Activated CD4-positive, alpha-beta memory T cell treated with anti-CD3 and anti-CD28 coated beads, Interleukin-2, amount 10 ng/mL, durations not matched to agents 7 days and 5 days (primary cell): ENCODE measurements at regions of chr14 and their contacts with region 1.

Region 1: DNA sequence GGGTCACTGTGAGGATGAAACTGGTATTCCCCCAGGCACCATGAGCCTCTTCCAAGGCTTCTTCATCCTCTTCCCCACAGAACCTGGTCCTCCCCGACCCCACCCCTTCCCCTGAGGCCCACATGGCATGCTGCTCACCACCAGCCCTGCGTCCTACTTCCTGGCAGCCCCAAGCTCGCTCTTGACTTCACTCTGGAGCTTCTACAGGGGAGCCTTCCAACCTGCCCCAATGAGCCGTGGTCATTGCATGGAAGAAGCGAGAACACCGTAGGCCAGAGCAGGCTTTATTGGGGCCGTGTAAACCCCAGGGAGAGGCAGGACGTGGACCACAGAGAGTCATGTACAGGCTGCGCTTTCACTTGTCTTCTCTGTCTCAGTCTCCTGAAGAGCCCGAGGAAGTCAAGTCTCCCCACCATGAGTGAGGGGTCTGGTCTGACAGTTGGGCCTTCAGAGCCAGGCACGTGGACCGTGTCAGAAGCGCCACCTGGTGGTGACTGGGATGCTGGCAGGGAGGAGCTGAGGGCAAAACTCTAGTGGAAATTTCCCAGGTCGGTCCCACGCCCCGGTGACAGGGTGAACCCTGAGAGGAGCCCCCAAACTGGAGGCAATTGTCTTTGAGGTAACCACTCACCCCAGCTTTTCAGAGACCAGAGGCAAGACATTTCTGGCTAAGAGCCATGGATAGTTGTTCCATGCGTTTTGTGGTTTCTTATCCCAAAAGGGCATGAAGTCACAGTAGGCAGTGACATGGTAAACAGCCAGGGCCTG is 17.5 kb downstream of the RPS6KL1 start:
- DNase-seq: peak; percentile 76
- H3K4me3 Mint-ChIP-seq: no peak overlapping the region
- H3K27ac Mint-ChIP-seq: no peak overlapping the region
- H3K4me1 Mint-ChIP-seq: peaks cover 3% of the 10 kb centered on the region
- H3K27me3 Mint-ChIP-seq: no peaks in the 10 kb centered on the region

Region 2: DNA sequence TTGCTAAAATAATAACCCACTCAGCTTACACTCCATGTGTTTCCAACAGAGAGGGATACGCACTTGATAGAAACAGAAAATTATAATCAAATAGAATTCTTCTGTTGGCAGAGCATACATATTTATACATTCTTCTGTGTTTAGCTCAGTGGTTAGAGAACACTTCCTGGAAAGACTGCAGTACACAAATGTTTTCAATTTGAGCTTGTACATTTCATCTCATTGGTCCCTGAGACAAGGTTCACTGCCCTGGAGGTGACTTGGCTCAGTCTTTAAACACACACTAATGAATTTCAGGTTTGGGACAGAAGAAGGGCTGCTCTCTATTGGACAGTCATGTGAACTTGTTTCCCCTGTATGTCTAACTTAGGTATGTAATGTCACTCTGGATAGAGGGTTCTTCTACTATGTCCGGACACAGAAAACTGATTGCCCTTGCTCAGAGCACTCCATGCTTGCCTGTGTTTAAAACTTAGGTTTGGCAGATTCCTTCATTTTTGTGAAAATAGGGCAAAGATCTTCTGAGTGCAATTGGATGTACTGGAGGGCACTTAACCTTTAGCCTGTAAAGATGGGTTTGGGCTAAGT is 52.5 kb before region 1 on chr14:
- CTCF ChIA-PET with region 1: interaction called, 285 read pairs
- POLR2A ChIA-PET with region 1: interaction called, 3 read pairs
- DNase-seq: no peak
- H3K4me3 Mint-ChIP-seq: no peak overlapping the region
- H3K27ac Mint-ChIP-seq: no peak overlapping the region
- H3K4me1 Mint-ChIP-seq: peaks cover 11% of the 10 kb centered on the region
- H3K27me3 Mint-ChIP-seq: peaks cover 4% of the 10 kb centered on the region

Region 3: GRCh38 chr14:74867673-74868072 is 37.9 kb before region 1 on chr14:
- CTCF ChIA-PET with region 1: interaction called, 285 read pairs
- POLR2A ChIA-PET with region 1: interaction called, 45 read pairs
- DNase-seq: peak; percentile 78
- H3K4me3 Mint-ChIP-seq: no peak overlapping the region
- H3K27ac Mint-ChIP-seq: peak overlapping the region; percentile 55
- H3K4me1 Mint-ChIP-seq: peaks cover 19% of the 10 kb centered on the region
- H3K27me3 Mint-ChIP-seq: no peaks in the 10 kb centered on the region

Region 4: DNA sequence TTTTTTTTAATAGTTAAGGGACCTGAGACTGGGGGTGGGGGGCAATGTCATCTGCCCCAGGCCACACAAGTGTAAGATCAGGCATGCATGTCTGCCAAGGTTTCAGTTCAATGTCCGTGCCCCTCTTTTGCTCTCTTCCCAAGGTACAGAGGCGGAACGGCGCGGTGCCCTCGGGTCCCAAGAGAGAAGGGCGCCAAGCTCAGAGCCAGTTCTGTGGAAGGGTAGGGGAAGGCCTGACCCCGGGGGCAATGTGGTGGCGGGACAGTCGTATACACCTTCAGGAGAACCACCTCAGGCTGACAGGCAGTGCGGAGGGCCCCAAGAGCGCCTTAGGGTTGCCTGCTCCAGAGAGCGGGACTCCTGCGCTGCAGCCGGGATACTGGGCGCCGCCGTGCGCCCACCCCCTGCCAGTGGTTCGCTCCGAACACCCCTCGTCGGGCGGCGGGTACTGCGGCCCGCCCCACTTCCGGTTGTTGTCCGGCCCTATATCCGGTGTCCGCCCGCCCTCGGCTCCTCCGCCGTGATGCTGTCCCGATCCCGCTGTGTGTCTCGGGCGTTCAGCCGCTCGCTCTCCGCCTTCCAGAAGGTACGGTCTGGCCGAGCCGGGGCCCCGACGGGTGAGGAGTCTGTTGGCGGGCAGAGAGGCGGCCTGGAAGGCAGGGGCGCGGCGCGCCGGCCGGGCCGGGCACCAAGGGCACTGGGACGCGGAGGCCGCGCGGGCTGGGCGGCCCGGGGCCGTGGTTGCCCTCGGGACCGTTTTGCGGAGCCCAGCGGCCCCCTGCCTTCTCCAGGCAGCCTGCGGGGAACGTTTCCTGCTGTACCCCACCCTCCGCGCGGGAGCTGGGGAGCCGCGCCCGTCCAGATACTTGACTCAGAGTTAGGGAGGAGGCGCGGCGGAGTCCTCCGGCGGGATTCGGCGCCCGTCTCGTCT is 23.9 kb before region 1 on chr14 and contains the start of gene DLST:
- CTCF ChIA-PET with region 1: interaction called, 44 read pairs
- POLR2A ChIA-PET with region 1: interaction called, 34 read pairs
- DNase-seq: peak; percentile 87
- H3K4me3 Mint-ChIP-seq: peak within 1 kb of the TSS; percentile 91
- H3K27ac Mint-ChIP-seq: peak within 1 kb of the TSS; percentile 92
- H3K4me1 Mint-ChIP-seq: peaks cover 61% of the 10 kb centered on the region
- H3K27me3 Mint-ChIP-seq: no peaks in the 10 kb centered on the region
- total RNA-seq, gene DLST: 106 to 108 TPM

Region 5: DNA sequence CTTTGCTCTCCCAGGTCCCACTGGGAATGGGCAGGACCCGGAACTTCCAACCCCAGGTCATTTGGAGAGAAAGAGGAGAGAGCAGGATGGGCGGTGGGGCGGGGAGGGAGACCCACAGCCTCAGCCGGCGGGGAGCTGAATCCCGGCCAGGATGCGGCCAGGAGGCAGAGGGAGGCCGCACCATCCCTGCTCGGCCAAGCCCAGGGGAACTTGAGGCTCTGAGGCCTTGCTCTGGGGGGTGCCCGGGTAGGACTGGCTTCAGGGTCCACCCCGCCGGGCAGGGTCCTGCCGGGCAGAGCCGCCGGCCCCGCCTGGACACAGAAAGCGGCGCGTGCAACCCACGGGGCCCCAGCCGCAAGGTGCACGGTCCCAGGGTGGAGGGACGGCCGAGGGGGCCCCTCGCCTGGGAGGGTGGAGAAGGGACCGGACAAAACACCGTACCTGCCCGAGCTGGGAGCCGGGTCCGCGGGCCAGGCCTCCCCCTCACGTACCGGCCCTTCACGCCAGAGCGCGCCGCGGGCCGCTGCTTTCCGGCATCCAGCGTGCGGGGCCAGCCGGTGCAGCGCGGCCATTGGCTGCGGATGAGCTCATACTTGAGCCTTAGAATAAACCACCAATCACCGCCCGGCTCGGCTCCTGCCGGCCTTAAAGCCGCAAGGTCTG is 17.3 kb after region 1 on chr14 and contains the start of gene RPS6KL1:
- CTCF ChIA-PET with region 1: interaction called, 16 read pairs
- POLR2A ChIA-PET with region 1: interaction called, 7 read pairs
- DNase-seq: peak; percentile 77
- H3K4me3 Mint-ChIP-seq: peak within 1 kb of the TSS; percentile 66
- H3K27ac Mint-ChIP-seq: no peak within 1 kb of the TSS
- H3K4me1 Mint-ChIP-seq: peaks cover 2% of the 10 kb centered on the region
- H3K27me3 Mint-ChIP-seq: peaks cover 19% of the 10 kb centered on the region
- total RNA-seq, gene RPS6KL1: 3.6 to 3.8 TPM

Region 6: GRCh38 chr14:74950795-74951442 is 45.4 kb after region 1 on chr14:
- CTCF ChIA-PET with region 1: no interaction called
- POLR2A ChIA-PET with region 1: no interaction called
- DNase-seq: no peak
- H3K4me3 Mint-ChIP-seq: no peak overlapping the region
- H3K27ac Mint-ChIP-seq: no peak overlapping the region
- H3K4me1 Mint-ChIP-seq: peaks cover 6% of the 10 kb centered on the region
- H3K27me3 Mint-ChIP-seq: no peaks in the 10 kb centered on the region

Region 7: GRCh38 chr14:75088574-75089373 is 183.2 kb after region 1 on chr14:
- CTCF ChIA-PET with region 1: interaction called, 18 read pairs
- POLR2A ChIA-PET with region 1: no interaction called
- DNase-seq: peak; percentile 35
- H3K4me3 Mint-ChIP-seq: no peak overlapping the region
- H3K27ac Mint-ChIP-seq: no peak overlapping the region
- H3K4me1 Mint-ChIP-seq: no peaks in the 10 kb centered on the region
- H3K27me3 Mint-ChIP-seq: no peaks in the 10 kb centered on the region